Naive thymus-derived CD4-positive, alpha-beta T cell (primary cell): ENCODE measurements at regions of chr19 and their contacts with region 1.

Region 1: DNA sequence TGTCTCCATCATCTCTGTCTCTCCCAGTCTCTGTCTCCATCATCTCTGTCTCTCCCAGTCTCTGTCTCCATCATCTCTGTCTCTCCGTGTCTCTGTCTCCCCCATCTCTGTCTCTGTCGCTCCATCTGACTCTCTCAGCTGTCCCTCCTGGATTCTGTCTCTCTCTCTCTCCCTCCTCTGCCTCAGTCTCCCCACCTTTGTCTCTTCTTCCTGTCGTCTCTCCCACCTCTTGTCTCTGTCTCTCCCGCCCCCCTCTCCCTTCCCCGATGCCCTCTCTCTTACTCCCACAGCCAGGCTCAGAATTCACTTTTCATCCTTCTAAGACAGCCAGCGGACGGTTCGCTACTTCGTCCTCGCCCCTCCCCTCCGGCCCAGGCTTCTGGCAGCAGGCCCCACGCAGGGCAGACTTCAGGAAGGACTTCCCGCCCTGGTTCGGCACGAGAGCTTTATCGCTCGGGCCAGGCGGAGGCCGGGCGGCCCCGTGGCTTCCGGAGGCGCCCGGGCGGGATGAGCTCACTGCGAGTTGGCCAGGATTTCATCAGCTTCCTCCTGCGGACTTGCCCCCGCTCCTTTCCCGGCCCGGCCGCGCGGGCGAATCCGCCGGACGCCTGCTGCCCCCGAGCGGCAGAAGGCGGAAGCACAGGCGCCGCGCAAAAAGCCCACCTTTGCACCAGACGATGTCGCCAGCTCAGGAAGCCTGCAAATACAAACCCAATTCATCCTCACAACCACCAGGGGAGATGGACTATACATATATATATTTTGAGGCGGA is 12.4 kb upstream of the CCDC9 start:
- DNase-seq: peak; percentile 80 to 94 (median 86)
- ATAC-seq: peak; percentile 69
- H3K4me3 ChIP-seq: peak overlapping the region; percentile 42
- H3K4me3 Mint-ChIP-seq: peak overlapping the region in 7 of 10 donors; percentile 68 to 86 (median 85)
- H3K27ac ChIP-seq: peak overlapping the region; percentile 28
- H3K27ac Mint-ChIP-seq: peak overlapping the region in 6 of 9 donors; percentile 61 to 95 (median 90)
- H3K4me1 ChIP-seq: peaks cover 35 to 37% of the 10 kb centered on the region in 2 donors
- H3K4me1 Mint-ChIP-seq: peaks cover 9 to 33% (median 25%) of the 10 kb centered on the region in 7 donors
- H3K27me3 ChIP-seq: no peaks in the 10 kb centered on the region
- H3K27me3 Mint-ChIP-seq: peaks cover 0 to 6% (median 0%) of the 10 kb centered on the region in 5 donors

Region 2: DNA sequence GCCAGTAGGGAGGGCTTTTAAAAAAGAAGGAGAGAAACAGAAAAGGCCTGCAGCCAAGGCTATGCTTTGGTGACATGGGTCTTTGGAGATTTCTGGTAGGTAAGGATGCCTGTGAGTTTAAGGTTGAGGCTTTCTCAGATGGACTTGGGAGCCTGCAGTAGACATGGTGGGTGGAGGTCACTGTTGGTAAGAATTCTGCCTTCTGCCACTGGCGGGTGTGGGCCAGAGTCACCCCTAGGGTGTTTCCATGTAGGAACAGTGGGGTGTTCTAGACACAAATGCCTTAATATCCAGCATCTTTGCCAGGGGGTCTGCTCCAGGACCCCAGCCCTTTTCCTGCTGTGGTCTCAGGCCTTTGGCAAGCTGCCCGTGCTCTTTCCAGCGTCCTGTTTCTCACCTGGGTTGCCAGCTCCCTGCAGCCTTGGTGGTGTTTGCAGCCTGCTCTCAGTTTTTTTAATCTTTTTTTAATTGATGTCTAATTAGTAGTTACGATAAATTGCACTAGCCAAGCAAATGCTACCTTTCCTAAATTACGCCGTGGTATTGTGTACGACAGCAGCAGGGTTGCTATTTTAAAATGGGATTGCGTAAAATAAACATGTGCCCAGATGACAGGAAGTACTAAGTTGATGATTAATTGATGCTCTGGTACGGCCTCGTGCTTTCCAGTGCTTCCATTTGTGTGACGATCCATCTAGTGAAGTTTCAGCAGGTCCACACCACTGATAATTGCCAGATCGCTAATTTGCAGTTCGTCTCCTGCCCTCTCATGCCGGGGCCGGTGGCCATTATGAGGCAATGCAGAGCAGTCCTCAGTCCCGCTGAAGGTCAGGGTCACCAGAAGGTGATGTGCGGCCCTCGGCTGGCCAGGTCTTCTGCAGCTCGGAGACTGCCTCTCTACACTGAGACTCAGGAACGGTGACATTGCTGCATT is 259.6 kb before region 1 on chr19:
- CTCF ChIA-PET with region 1: no interaction called
- POLR2A ChIA-PET with region 1: no interaction called
- intact Hi-C with region 1: no loop called
- DNase-seq: no peak
- ATAC-seq: peak; percentile 59
- H3K4me3 ChIP-seq: no peak overlapping the region
- H3K4me3 Mint-ChIP-seq: no peak overlapping the region
- H3K27ac ChIP-seq: no peak overlapping the region
- H3K27ac Mint-ChIP-seq: peak overlapping the region in 1 of 9 donors; percentile 41
- H3K4me1 ChIP-seq: peaks cover 0 to 8% of the 10 kb centered on the region in 2 donors
- H3K4me1 Mint-ChIP-seq: peaks cover 9 to 19% (median 17%) of the 10 kb centered on the region in 7 donors
- H3K27me3 ChIP-seq: no peaks in the 10 kb centered on the region
- H3K27me3 Mint-ChIP-seq: no peaks in the 10 kb centered on the region

Region 3: GRCh38 chr19:47035127-47036096 is 208.6 kb before region 1 on chr19:
- CTCF ChIA-PET with region 1: no interaction called
- POLR2A ChIA-PET with region 1: no interaction called
- intact Hi-C with region 1: loop called in 1 of 2 experiments (anchors 10 kb)
- DNase-seq: peak; percentile 91 to 100 (median 97)
- ATAC-seq: peak; percentile 99
- H3K4me3 ChIP-seq: peak overlapping the region; percentile 74
- H3K4me3 Mint-ChIP-seq: peak overlapping the region; percentile 83 to 97 (median 92)
- H3K27ac ChIP-seq: peak overlapping the region; percentile 62
- H3K27ac Mint-ChIP-seq: peak overlapping the region; percentile 71 to 93 (median 85)
- H3K4me1 ChIP-seq: peaks cover 11 to 13% of the 10 kb centered on the region in 2 donors
- H3K4me1 Mint-ChIP-seq: peaks cover 7 to 23% (median 16%) of the 10 kb centered on the region in 7 donors
- H3K27me3 ChIP-seq: no peaks in the 10 kb centered on the region
- H3K27me3 Mint-ChIP-seq: peaks cover 6 to 26% (median 14%) of the 10 kb centered on the region in 5 donors

Region 4: GRCh38 chr19:47143322-47144073 is 100.5 kb before region 1 on chr19:
- CTCF ChIA-PET with region 1: interaction called, 175 read pairs
- POLR2A ChIA-PET with region 1: interaction called, 23 read pairs
- intact Hi-C with region 1: no loop called
- DNase-seq: no peak
- ATAC-seq: no peak
- H3K4me3 ChIP-seq: no peak overlapping the region
- H3K4me3 Mint-ChIP-seq: peak overlapping the region in 3 of 10 donors; percentile 9 to 45 (median 32)
- H3K27ac ChIP-seq: no peak overlapping the region
- H3K27ac Mint-ChIP-seq: peak overlapping the region in 4 of 9 donors; percentile 11 to 73 (median 42)
- H3K4me1 ChIP-seq: peaks cover 21 to 38% of the 10 kb centered on the region in 2 donors
- H3K4me1 Mint-ChIP-seq: peaks cover 29 to 75% (median 57%) of the 10 kb centered on the region in 7 donors
- H3K27me3 ChIP-seq: no peaks in the 10 kb centered on the region
- H3K27me3 Mint-ChIP-seq: no peaks in the 10 kb centered on the region

Region 5: DNA sequence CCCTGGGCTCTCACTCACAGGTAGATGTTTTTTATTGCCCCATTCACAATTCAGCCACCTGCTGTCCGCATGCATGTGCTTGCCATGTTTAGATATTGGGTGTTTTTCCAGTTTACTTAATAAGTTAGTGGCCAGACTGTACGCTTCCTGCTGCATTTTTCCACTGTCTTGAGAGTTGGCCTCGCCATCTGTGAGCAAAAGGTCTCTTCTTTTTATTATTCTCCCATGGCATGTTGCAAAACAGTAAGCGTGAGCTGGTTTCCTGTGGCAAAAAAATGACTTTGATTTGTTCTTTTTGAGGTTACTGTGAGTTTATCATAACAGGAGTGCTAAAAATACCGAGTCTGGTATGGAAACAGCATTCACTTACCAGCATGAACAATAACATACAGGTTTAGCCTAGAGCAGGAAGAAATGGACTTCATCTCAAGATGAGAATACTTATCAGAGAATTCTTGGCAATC is 67.3 kb before region 1 on chr19:
- CTCF ChIA-PET with region 1: interaction called, 18 read pairs
- POLR2A ChIA-PET with region 1: interaction called, 4 read pairs
- intact Hi-C with region 1: no loop called
- DNase-seq: peak in 8 of 9 donors; percentile 44 to 83 (median 79)
- ATAC-seq: peak; percentile 90
- H3K4me3 ChIP-seq: peak overlapping the region; percentile 28
- H3K4me3 Mint-ChIP-seq: peak overlapping the region; percentile 73 to 89 (median 81)
- H3K27ac ChIP-seq: peak overlapping the region; percentile 58
- H3K27ac Mint-ChIP-seq: peak overlapping the region; percentile 87 to 98 (median 96)
- H3K4me1 ChIP-seq: peaks cover 40 to 55% of the 10 kb centered on the region in 2 donors
- H3K4me1 Mint-ChIP-seq: peaks cover 40 to 85% (median 76%) of the 10 kb centered on the region in 7 donors
- H3K27me3 ChIP-seq: no peaks in the 10 kb centered on the region
- H3K27me3 Mint-ChIP-seq: no peaks in the 10 kb centered on the region

Region 6: GRCh38 chr19:47210689-47211316 is 33.2 kb before region 1 on chr19:
- CTCF ChIA-PET with region 1: interaction called, 183 read pairs
- POLR2A ChIA-PET with region 1: interaction called, 67 read pairs
- intact Hi-C with region 1: loop called (anchors 1 kb)
- DNase-seq: peak; percentile 51 to 83 (median 76)
- ATAC-seq: peak; percentile 97
- H3K4me3 ChIP-seq: no peak overlapping the region
- H3K4me3 Mint-ChIP-seq: peak overlapping the region in 8 of 10 donors; percentile 5 to 53 (median 18)
- H3K27ac ChIP-seq: peak overlapping the region; percentile 49
- H3K27ac Mint-ChIP-seq: peak overlapping the region; percentile 55 to 88 (median 82)
- H3K4me1 ChIP-seq: peaks cover 8 to 10% of the 10 kb centered on the region in 2 donors
- H3K4me1 Mint-ChIP-seq: peaks cover 8 to 30% (median 14%) of the 10 kb centered on the region in 7 donors
- H3K27me3 ChIP-seq: no peaks in the 10 kb centered on the region
- H3K27me3 Mint-ChIP-seq: no peaks in the 10 kb centered on the region

Region 7: DNA sequence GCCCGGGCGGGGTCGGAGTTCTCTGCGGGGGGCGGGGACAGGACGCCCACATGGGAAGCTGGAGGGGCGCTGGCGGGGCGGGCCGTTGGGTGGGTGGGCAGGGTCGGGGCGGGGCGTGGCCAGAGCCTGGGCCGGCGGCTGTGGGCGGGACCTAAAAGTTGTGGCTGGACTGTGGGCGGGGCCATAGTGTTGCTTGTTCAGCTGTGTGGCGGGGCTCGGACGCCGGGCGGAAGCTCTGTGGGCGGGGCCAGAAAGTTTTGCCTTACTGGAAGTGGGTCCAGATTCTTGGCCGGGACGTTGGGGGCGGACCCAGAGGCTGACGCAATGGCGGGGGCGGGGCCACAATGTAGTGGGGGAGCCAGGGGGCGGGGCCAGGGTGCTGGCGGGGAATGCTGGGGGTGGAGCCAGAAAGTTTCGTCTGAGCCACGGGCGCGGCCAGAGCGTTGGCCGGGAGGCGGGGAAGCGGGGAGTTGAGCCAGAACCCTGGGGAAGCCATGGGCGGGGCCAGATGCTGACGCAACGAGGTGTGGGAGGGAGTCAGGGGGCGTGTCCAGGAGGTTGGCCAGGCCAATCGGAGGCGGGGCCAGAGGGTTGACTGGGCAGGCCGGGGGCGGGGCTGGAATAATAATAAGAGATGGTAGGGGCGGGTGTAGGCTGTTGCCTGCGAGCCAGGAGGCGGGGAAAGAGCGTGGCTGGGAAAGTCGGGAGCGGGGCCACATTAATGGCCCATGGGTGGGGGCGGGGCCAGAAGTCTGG is 12.9 kb after region 1 on chr19:
- CTCF ChIA-PET with region 1: interaction called, 8 read pairs
- POLR2A ChIA-PET with region 1: interaction called, 38 read pairs
- intact Hi-C with region 1: loop called (anchors 1 to 2 kb)
- DNase-seq: peak; percentile 94 to 100 (median 96)
- ATAC-seq: peak; percentile 88
- H3K4me3 ChIP-seq: peak overlapping the region; percentile 65
- H3K4me3 Mint-ChIP-seq: peak overlapping the region; percentile 85 to 97 (median 90)
- H3K27ac ChIP-seq: peak overlapping the region; percentile 90
- H3K27ac Mint-ChIP-seq: peak overlapping the region; percentile 90 to 99 (median 97)
- H3K4me1 ChIP-seq: peaks cover 15 to 24% of the 10 kb centered on the region in 2 donors
- H3K4me1 Mint-ChIP-seq: peaks cover 35 to 46% (median 39%) of the 10 kb centered on the region in 7 donors
- H3K27me3 ChIP-seq: no peaks in the 10 kb centered on the region
- H3K27me3 Mint-ChIP-seq: peaks cover 0 to 2% (median 0%) of the 10 kb centered on the region in 5 donors